ENCODE measurements at regions of chr10 and their contacts with region 1.

Region 1: GRCh38 chr10:98309366-98310355 is 41.7 kb upstream of the LOXL4 start:
- DNase-seq: peak; percentile 75
- H3K4me3 ChIP-seq: peak overlapping the region; percentile 42
- H3K27ac ChIP-seq: peak overlapping the region; percentile 34
- H3K27me3 ChIP-seq: no peaks in the 10 kb centered on the region
- CTCF ChIP-seq: peak; percentile 87

Region 2: GRCh38 chr10:98170249-98171117 is 139.2 kb before region 1 on chr10:
- CTCF ChIA-PET with region 1: interaction called, 111 read pairs
- POLR2A ChIA-PET with region 1: no interaction called
- DNase-seq: peak; percentile 20
- H3K4me3 ChIP-seq: no peak overlapping the region
- H3K27ac ChIP-seq: no peak overlapping the region
- H3K27me3 ChIP-seq: no peaks in the 10 kb centered on the region
- CTCF ChIP-seq: peak; percentile 76

Region 3: DNA sequence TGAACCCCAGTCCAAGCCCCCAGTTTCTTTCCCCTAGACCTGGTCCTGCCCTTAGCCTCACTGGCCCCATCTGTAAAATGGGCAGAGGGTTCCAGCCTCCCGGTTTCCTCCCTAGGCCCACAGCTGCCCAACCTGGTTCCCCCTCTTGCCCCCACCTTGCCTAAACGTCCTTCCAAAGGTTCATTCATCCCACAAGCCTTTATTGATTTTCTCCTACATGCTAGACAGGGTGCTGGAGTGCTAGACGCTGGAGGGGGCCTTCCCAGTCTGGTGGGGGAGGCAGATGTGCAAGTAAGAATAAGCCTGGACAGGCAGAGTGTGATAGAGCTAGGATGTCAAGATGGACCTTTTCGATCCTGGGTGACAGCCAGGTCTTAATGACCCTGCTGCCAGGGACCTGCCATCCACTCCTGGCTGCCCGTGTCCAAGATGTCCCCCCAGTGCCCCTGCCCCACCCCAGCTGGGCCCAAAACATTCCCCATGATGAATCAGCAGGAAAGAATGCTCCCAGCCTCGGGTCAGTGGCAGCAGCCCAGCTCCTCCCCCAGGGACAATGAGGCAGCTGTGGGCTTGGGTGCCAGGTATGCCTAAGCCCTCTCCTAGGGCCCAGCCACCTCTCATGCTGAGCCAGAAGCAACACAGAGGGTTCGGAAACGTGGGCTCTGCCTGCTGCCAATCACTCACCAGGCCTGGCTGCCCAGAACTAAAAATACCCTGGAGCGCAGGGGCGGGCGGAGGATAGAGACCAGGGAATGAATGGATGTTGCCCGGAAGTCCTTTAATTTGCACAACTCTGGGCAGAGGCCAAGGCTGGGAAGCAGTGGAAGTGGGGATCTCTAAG is 40.4 kb before region 1 on chr10:
- CTCF ChIA-PET with region 1: interaction called, 24 read pairs
- POLR2A ChIA-PET with region 1: interaction called, 4 read pairs
- DNase-seq: peak; percentile 41
- H3K4me3 ChIP-seq: peak overlapping the region; percentile 58; the same call in 1 of the 2 replicates
- H3K27ac ChIP-seq: peak overlapping the region; percentile 39
- H3K27me3 ChIP-seq: no peaks in the 10 kb centered on the region
- CTCF ChIP-seq: no peak

Region 4: DNA sequence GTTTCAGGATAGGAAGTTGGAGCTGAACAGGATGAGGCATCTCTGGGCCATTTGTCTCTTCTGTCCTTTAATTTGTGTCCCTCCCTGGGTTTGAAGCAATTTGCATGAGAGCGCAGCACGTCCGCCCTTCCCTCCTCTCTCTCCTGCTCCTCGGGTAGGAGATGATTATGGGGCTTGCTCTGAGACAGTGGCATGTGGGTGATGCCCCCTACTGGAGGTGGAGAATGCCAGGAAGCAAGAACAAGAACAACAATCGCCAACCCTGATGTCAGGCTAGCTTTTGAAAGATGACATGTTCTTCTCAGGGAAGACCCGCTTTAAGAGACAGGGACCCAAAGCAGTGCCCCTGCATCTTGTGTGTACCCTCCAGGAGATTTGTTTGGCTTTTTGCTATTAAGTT is 22.2 kb after region 1 on chr10:
- CTCF ChIA-PET with region 1: interaction called, 22 read pairs
- POLR2A ChIA-PET with region 1: no interaction called
- DNase-seq: no peak
- H3K4me3 ChIP-seq: no peak overlapping the region
- H3K27ac ChIP-seq: no peak overlapping the region
- H3K27me3 ChIP-seq: no peaks in the 10 kb centered on the region
- CTCF ChIP-seq: peak; percentile 29

Region 5: GRCh38 chr10:98394851-98395440 is 85.3 kb after region 1 on chr10:
- CTCF ChIA-PET with region 1: interaction called, 29 read pairs
- POLR2A ChIA-PET with region 1: interaction called, 3 read pairs
- DNase-seq: no peak
- H3K4me3 ChIP-seq: no peak overlapping the region
- H3K27ac ChIP-seq: peak overlapping the region; percentile 31
- H3K27me3 ChIP-seq: no peaks in the 10 kb centered on the region
- CTCF ChIP-seq: no peak